Activated T-helper 2 cell treated with anti-CD3 and anti-CD28 coated beads, Interferon-gamma antibody, Interleukin-2, Interleukin-4, amounts not matched to agents 10 μg/mL and 5 μg/mL and 100 μg/mL, durations not matched to agents 14 hours and 24 hours and 36 hours (primary cell): ENCODE measurements at regions of chr6 and their contacts with region 1.

Region 1: GRCh38 chr6:155174576-155175211 is 89.1 kb upstream of the CLDN20 start:
- DNase-seq: peak; percentile 63
- H3K4me3 Mint-ChIP-seq: no peak overlapping the region
- H3K27ac Mint-ChIP-seq: peak overlapping the region; percentile 82
- H3K4me1 Mint-ChIP-seq: peaks cover 41% of the 10 kb centered on the region
- H3K27me3 Mint-ChIP-seq: no peaks in the 10 kb centered on the region

Region 2: GRCh38 chr6:154488802-154489437 is 685.8 kb before region 1 on chr6:
- intact Hi-C with region 1: no loop called
- DNase-seq: no peak
- H3K4me3 Mint-ChIP-seq: no peak overlapping the region
- H3K27ac Mint-ChIP-seq: no peak overlapping the region
- H3K4me1 Mint-ChIP-seq: no peaks in the 10 kb centered on the region
- H3K27me3 Mint-ChIP-seq: peaks cover 4% of the 10 kb centered on the region

Region 3: GRCh38 chr6:154675602-154676088 is 499.0 kb before region 1 on chr6:
- intact Hi-C with region 1: loop called (anchors 1 kb)
- DNase-seq: peak; percentile 80
- H3K4me3 Mint-ChIP-seq: no peak overlapping the region
- H3K27ac Mint-ChIP-seq: no peak overlapping the region
- H3K4me1 Mint-ChIP-seq: peaks cover 2% of the 10 kb centered on the region
- H3K27me3 Mint-ChIP-seq: peaks cover 2% of the 10 kb centered on the region

Region 4: GRCh38 chr6:154928325-154928922 is 246.3 kb before region 1 on chr6:
- intact Hi-C with region 1: loop called (anchors 1 kb)
- DNase-seq: peak; percentile 36
- H3K4me3 Mint-ChIP-seq: no peak overlapping the region
- H3K27ac Mint-ChIP-seq: no peak overlapping the region
- H3K4me1 Mint-ChIP-seq: peaks cover 16% of the 10 kb centered on the region
- H3K27me3 Mint-ChIP-seq: no peaks in the 10 kb centered on the region

Region 5: DNA sequence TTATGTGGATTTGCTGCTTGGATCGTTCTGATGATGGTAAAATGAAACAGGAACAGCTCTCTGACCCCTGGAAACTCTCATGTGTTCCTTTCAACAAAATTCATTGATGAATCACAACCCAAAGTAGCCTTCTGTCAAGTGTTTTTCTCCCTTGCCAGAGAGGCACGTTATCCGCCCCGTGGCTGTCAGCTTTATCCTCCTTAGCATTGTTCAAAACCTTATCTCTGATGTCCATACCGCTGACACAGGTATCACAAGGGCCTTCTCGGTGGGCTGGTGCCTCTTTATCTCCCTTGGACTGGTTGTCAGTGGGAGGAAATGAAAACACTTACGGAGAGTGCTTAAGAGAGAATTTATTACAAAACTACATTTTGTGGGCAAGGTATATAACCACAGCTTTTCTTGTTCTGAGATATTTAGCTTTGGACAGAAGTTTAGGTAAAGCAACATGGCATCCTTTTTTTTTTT is 94.7 kb before region 1 on chr6:
- intact Hi-C with region 1: loop called (anchors 1 kb)
- DNase-seq: no peak
- H3K4me3 Mint-ChIP-seq: no peak overlapping the region
- H3K27ac Mint-ChIP-seq: peak overlapping the region; percentile 85
- H3K4me1 Mint-ChIP-seq: peaks cover 55% of the 10 kb centered on the region
- H3K27me3 Mint-ChIP-seq: no peaks in the 10 kb centered on the region

Region 6: DNA sequence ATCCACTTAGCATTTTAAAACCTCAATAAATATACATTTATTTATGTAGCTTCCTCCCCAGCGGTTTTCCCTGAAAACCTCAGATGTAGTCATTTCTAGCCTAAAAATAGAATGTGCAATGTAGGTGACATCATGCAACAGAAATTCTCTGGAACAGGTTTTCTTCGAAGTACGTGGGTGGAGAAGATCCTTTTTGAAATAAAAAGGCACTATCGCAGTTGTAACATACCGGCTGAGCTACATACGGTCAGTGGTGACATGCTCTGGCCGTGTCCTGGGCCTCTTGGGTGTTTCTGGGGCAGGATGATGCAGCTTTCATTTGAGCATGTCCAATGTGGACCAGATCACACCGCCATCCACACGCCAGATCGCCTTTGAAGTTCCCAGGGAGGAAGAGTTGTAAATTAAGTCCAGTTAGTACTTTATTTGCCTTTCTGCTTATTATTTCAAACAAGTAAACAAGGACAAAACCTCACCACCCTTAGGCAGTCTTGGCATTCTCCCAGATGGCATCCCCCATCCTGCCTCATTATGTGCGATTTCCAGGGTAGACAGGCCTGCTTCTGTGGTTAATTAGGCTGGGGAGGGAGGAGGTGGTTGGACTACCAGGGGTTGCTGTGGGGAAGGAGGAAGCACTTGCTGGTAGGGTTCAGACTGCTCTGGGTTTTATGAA is 20.4 kb before region 1 on chr6:
- intact Hi-C with region 1: loop called (anchors 1 kb)
- DNase-seq: peak; percentile 35
- H3K4me3 Mint-ChIP-seq: peak overlapping the region; percentile 66
- H3K27ac Mint-ChIP-seq: peak overlapping the region; percentile 99
- H3K4me1 Mint-ChIP-seq: peaks cover 71% of the 10 kb centered on the region
- H3K27me3 Mint-ChIP-seq: no peaks in the 10 kb centered on the region

Region 7: GRCh38 chr6:155264693-155265320 is 90.1 kb after region 1 on chr6:
- intact Hi-C with region 1: loop called (anchors 5 kb)
- DNase-seq: no peak
- H3K4me3 Mint-ChIP-seq: no peak overlapping the region
- H3K27ac Mint-ChIP-seq: no peak overlapping the region
- H3K4me1 Mint-ChIP-seq: peaks cover 28% of the 10 kb centered on the region
- H3K27me3 Mint-ChIP-seq: no peaks in the 10 kb centered on the region